Calu3 (cell line): ENCODE measurements at regions of chr2 and their contacts with region 1.

Region 1: DNA sequence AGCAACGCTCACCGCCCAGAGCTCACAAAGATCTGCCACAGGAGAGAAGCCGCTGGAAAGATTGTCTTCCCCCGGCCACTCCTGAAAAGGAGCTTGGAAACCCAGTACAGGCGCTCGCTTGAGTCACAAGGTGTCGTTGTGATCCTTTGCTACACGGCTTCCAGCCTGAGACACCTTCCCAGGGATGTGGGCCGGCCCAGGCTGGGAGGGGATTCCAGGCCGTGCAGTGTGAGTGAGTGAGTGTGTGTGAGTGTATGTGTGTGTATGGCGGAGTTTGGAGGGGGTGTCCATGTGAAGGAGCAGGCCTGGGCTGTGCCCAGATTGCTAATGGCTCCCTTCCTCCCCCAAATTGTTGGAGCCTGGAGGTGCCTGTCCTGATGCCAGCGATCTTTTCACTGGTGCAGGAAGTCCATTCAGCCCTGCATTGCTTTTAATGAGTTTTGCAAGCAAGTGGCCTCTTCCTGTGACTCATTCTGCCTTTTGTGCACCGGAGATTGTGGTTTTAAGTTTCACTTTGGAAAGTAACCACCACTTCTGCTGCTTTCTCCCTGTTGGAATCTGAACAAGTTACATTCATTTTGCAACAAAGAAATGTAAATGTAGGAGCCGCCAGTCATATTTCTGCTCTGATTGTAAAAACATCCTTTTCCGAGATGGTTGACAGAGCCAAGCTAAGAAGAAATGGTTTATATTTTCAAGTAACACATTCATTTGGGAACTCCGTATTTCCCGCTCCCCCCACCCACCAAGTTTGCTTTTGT is 83.7 kb downstream of the LPIN1 start:
- DNase-seq: peak; percentile 78
- H3K4me3 Mint-ChIP-seq: peak overlapping the region; percentile 55
- H3K27ac Mint-ChIP-seq: peak overlapping the region; percentile 55
- H3K4me1 Mint-ChIP-seq: peaks cover 10% of the 10 kb centered on the region
- H3K27me3 Mint-ChIP-seq: no peaks in the 10 kb centered on the region
- CTCF ChIP-seq: no peak

Region 2: GRCh38 chr2:11539317-11540152 is 290.6 kb before region 1 on chr2:
- CTCF ChIA-PET with region 1: no interaction called
- intact Hi-C with region 1: no loop called
- DNase-seq: no peak
- H3K4me3 Mint-ChIP-seq: no peak overlapping the region
- H3K27ac Mint-ChIP-seq: no peak overlapping the region
- H3K4me1 Mint-ChIP-seq: no peaks in the 10 kb centered on the region
- H3K27me3 Mint-ChIP-seq: peaks cover 85% of the 10 kb centered on the region
- CTCF ChIP-seq: no peak

Region 3: DNA sequence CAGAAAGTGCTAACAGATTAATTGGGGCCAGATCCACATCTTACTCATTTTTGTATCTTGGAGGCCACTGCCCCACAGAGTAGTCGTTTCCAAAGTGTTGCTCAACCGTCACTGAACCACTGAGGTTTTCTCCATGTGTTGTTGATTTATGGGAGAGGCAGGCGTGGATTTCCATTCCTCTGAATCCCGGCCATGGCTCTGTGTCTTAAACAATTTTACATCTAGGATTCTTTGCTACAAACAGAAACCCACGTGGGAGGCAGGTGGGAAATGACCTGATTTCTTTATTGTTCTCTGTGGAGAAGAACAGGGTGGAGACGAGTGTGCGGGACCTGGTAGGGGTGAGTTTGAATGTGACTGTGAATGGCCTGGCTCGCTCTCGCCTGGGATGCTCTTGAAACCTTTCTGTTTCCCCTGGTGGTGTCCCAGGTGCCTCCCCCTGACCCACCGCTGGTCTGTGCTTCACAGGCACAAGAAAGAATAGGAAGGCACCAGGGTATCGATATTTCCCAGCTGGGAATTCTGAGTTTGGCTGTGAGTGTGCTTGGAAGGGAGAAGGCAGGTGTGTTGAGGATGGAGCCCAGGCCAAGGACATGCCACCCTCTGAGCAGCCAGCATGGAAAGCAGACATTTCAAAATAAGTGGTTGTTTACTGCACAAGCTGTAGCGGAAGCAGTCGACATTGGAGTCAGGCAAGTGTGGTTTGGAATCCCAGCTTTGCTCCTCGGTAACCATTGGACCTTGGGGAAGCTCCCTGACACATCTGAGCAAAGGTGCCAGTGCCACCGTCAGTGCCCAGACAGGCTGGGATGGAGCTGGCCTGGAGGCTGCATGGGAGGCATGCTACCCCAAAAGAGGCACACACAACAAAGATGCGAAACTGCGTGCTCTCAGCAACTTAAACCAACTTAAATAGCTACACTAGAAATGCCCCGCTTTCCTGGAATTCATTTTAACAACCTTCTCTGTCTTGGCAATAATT is 33.6 kb before region 1 on chr2:
- CTCF ChIA-PET with region 1: no interaction called
- intact Hi-C with region 1: no loop called
- DNase-seq: no peak
- H3K4me3 Mint-ChIP-seq: no peak overlapping the region
- H3K27ac Mint-ChIP-seq: no peak overlapping the region
- H3K4me1 Mint-ChIP-seq: no peaks in the 10 kb centered on the region
- H3K27me3 Mint-ChIP-seq: no peaks in the 10 kb centered on the region
- CTCF ChIP-seq: no peak

Region 4: GRCh38 chr2:11811036-11811654 is 19.0 kb before region 1 on chr2:
- CTCF ChIA-PET with region 1: no interaction called
- intact Hi-C with region 1: no loop called
- DNase-seq: no peak
- H3K4me3 Mint-ChIP-seq: no peak overlapping the region
- H3K27ac Mint-ChIP-seq: no peak overlapping the region
- H3K4me1 Mint-ChIP-seq: no peaks in the 10 kb centered on the region
- H3K27me3 Mint-ChIP-seq: no peaks in the 10 kb centered on the region
- CTCF ChIP-seq: no peak

Region 5: DNA sequence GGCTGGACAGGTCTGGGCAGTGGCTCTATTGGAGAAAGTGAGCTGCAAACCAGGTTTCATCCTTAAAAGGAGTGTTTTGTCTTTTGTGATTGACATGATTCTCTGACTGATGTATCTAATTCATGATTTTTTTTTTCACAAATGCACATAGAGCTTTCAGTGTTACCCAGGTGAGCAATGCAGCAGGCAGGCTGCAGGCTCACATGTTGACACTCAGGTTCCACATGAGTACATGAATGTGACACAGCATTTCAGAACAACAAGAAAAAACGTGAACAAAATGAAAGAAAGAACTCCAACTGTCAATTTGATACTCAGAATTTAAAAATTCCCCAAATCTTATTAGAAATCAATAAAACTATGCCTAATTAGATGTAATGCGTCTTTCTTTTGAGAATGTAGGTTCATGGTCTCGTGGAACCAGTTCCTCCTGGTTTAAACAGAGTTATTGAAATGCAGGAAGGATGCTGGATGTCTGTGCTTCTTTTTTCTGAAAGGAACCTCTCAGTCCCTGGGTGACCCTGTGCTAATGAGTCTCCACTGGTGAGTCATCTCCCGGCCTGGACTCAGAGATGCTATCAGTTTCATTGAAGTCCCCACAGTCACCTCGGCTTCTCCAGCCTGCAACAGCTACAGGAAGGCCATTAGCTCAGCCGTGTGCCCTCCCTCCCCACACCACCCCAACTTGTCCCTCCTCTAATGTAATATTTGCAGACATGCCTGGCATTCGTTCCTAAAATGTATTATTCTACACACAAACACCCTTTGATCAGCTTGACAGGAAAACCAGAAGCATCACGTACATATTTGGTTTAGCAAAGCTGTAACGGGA is 346.7 kb after region 1 on chr2:
- CTCF ChIA-PET with region 1: no interaction called
- intact Hi-C with region 1: loop called (anchors 10 kb)
- DNase-seq: peak; percentile 48
- H3K4me3 Mint-ChIP-seq: no peak overlapping the region
- H3K27ac Mint-ChIP-seq: no peak overlapping the region
- H3K4me1 Mint-ChIP-seq: no peaks in the 10 kb centered on the region
- H3K27me3 Mint-ChIP-seq: peaks cover 47% of the 10 kb centered on the region
- CTCF ChIP-seq: no peak

Region 6: DNA sequence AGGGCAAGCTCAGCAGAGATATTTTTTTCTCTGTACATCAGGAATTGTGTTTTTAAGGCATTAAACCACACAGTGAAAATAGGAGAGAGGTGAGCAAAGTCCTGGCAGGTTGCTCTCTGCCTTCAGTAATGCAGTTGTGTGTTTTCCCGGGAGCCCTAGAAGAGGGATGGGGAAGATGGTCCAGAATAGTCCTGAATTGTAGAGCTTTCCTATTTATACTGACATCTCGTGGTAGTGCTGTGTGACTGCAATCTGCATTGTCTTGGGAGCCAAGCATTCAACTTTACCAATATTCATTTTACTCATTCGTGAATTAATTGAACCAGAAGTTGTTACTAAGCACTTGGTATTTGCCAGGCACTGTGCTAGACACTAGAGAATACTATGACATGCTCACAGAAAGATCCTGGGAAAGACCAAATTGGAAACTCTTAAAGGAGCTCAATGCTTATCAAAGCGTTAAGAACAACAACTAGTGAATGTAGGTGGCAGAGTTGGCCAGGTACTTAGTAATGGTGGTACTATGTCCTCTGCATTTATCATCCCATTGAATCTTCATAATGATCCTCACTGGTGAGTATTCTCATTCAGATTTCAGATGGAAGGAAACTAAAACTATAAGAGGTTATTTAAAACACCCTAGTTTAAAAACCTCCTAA is 1101.2 kb after region 1 on chr2:
- CTCF ChIA-PET with region 1: interaction called, 9 read pairs
- intact Hi-C with region 1: loop called (anchors 1 kb)
- DNase-seq: peak; percentile 7
- H3K4me3 Mint-ChIP-seq: no peak overlapping the region
- H3K27ac Mint-ChIP-seq: no peak overlapping the region
- H3K4me1 Mint-ChIP-seq: no peaks in the 10 kb centered on the region
- H3K27me3 Mint-ChIP-seq: no peaks in the 10 kb centered on the region
- CTCF ChIP-seq: peak; percentile 44

Region 7: GRCh38 chr2:13006829-13007717 is 1176.9 kb after region 1 on chr2:
- CTCF ChIA-PET with region 1: interaction called, 18 read pairs
- intact Hi-C with region 1: loop called (anchors 1 kb)
- DNase-seq: peak; percentile 68
- H3K4me3 Mint-ChIP-seq: no peak overlapping the region
- H3K27ac Mint-ChIP-seq: no peak overlapping the region
- H3K4me1 Mint-ChIP-seq: no peaks in the 10 kb centered on the region
- H3K27me3 Mint-ChIP-seq: no peaks in the 10 kb centered on the region
- CTCF ChIP-seq: peak; percentile 86